ENCODE measurements at regions of chr5 and their contacts with region 1.

Region 1: GRCh38 chr5:108748401-108749127 is 867 bp downstream of the FER start:
- DNase-seq: peak; percentile 99
- ATAC-seq: peak; percentile 95
- H3K4me3 ChIP-seq: peak overlapping the region; percentile 83
- H3K27ac ChIP-seq: peak overlapping the region; percentile 91
- H3K4me1 ChIP-seq: 0 out of 2 replicates have a peak, but pooled peaks cover under 1% of the 10 kb centered on the region
- H3K27me3 ChIP-seq: no peaks in the 10 kb centered on the region
- CTCF ChIP-seq: 0 out of 2 replicates have a peak, but pooled peaks have one; percentile 10
- POLR2A ChIP-seq: peak; percentile 98
- RAD21 ChIP-seq: peak; percentile 18

Region 2: GRCh38 chr5:108560581-108560980 is 188.0 kb before region 1 on chr5:
- CTCF ChIA-PET with region 1: no interaction called
- POLR2A ChIA-PET with region 1: no interaction called
- dilution Hi-C with region 1: no loop called
- in situ Hi-C with region 1: no loop called
- intact Hi-C with region 1: loop called (anchors 2 kb)
- DNase-seq: peak; percentile 98
- ATAC-seq: peak; percentile 96
- H3K4me3 ChIP-seq: no peak overlapping the region
- H3K27ac ChIP-seq: peak overlapping the region; percentile 100; the same call in 1 of the 2 replicates
- H3K4me1 ChIP-seq: peaks cover 10% of the 10 kb centered on the region
- H3K27me3 ChIP-seq: no peaks in the 10 kb centered on the region
- CTCF ChIP-seq: no peak
- POLR2A ChIP-seq: no peak
- RAD21 ChIP-seq: 0 out of 2 replicates have a peak, but pooled peaks have one; percentile 1

Region 3: GRCh38 chr5:108727651-108728565 is 20.7 kb before region 1 on chr5:
- CTCF ChIA-PET with region 1: interaction called, 4 read pairs
- POLR2A ChIA-PET with region 1: interaction called, 14 read pairs
- dilution Hi-C with region 1: no loop called
- in situ Hi-C with region 1: no loop called
- intact Hi-C with region 1: no loop called
- DNase-seq: peak; percentile 89
- ATAC-seq: peak; percentile 100
- H3K4me3 ChIP-seq: peak overlapping the region; percentile 67
- H3K27ac ChIP-seq: peak overlapping the region; percentile 87
- H3K4me1 ChIP-seq: no peaks in the 10 kb centered on the region; the same call in 1 of the 2 replicates
- H3K27me3 ChIP-seq: no peaks in the 10 kb centered on the region
- CTCF ChIP-seq: no peak
- POLR2A ChIP-seq: peak; percentile 59; the same call in 1 of the 2 replicates
- RAD21 ChIP-seq: peak; percentile 17; the same call in 1 of the 2 replicates

Region 4: DNA sequence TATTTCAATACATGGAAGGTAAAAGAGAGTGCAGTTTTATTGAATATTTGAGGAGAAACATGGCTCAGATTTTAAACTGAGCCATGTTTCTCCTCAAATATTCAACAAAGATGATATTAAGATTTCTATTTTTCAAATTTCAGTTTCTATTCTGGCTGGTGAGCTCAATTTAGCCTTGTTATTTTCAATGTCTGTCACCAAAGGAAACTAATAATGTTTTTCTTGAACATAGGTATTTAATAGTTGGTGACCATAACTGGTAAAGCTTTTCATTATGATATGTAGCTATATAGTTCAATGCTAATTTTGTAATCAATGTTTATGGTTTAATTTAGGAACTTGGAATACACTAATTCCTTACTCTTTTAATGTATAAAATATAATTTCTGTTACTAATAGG is 176.5 kb after region 1 on chr5:
- CTCF ChIA-PET with region 1: no interaction called
- POLR2A ChIA-PET with region 1: no interaction called
- dilution Hi-C with region 1: no loop called
- in situ Hi-C with region 1: no loop called
- intact Hi-C with region 1: loop called (anchors 5 kb)
- DNase-seq: no peak
- ATAC-seq: no peak
- H3K4me3 ChIP-seq: no peak overlapping the region
- H3K27ac ChIP-seq: no peak overlapping the region
- H3K4me1 ChIP-seq: no peaks in the 10 kb centered on the region
- H3K27me3 ChIP-seq: no peaks in the 10 kb centered on the region
- CTCF ChIP-seq: no peak
- POLR2A ChIP-seq: no peak
- RAD21 ChIP-seq: no peak

Region 5: GRCh38 chr5:109468737-109469420 is 720.3 kb after region 1 on chr5:
- CTCF ChIA-PET with region 1: no interaction called
- POLR2A ChIA-PET with region 1: no interaction called
- dilution Hi-C with region 1: no loop called
- in situ Hi-C with region 1: no loop called
- intact Hi-C with region 1: loop called (anchors 5 kb)
- DNase-seq: peak; percentile 94
- ATAC-seq: peak; percentile 89
- H3K4me3 ChIP-seq: no peak overlapping the region
- H3K27ac ChIP-seq: no peak overlapping the region
- H3K4me1 ChIP-seq: no peaks in the 10 kb centered on the region; the same call in 1 of the 2 replicates
- H3K27me3 ChIP-seq: peaks cover 3% of the 10 kb centered on the region
- CTCF ChIP-seq: peak; percentile 80
- POLR2A ChIP-seq: no peak
- RAD21 ChIP-seq: peak; percentile 82

Region 6: DNA sequence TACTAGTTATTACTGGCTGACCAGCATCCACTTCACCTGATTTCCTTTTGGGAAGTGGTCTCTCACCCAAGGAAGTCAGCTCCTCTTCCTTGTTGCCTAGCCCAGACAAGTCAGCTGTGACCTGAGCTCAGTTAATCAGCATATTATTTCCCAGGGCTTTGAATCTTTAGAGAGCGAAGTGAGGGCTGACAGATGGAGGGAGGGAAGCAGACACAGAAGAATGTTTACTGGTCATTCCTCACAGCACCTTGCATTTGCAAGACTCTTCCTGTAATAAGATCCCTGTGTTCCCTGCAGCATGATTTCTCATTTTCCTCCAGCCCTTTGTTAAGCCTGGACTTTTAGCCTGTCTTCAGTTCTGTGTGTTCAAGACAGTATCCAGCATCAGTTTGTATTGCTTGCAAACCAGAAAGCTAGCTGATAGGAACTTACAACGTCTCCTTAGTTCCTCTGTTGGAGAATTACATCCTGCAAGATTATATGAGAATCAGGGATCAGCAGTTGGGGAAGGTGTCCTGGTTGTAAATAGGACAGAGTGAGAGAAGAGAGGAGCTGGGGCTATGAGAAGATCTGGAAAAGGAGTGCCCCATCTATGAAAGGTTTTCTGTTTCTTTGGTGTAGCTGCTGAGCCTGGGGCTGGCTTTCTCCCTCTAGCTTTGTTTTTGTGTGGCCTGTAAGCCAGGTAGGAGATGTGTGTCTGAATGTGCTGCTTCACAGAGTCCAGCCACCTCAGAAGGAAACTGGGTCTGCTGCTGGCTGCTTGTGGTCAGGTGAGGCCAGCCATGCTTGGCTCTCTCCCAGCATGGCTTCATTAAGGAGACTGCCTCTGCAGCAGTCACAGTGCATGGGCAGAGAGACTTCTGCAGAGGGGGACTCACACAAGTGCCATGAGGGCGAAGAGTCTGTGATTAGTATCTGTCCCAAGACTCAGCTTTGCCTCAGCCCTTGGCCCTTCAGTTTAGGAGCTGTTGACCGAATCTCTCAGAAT is 991.5 kb after region 1 on chr5:
- CTCF ChIA-PET with region 1: no interaction called
- POLR2A ChIA-PET with region 1: no interaction called
- dilution Hi-C with region 1: no loop called
- in situ Hi-C with region 1: no loop called
- intact Hi-C with region 1: no loop called
- DNase-seq: peak; percentile 55
- ATAC-seq: peak; percentile 30
- H3K4me3 ChIP-seq: no peak overlapping the region
- H3K27ac ChIP-seq: peak overlapping the region; percentile 55
- H3K4me1 ChIP-seq: peaks cover 22% of the 10 kb centered on the region
- H3K27me3 ChIP-seq: no peaks in the 10 kb centered on the region
- CTCF ChIP-seq: no peak
- POLR2A ChIP-seq: no peak
- RAD21 ChIP-seq: no peak